ENCODE measurements at regions of chr1 and their contacts with region 1.

Region 1: DNA sequence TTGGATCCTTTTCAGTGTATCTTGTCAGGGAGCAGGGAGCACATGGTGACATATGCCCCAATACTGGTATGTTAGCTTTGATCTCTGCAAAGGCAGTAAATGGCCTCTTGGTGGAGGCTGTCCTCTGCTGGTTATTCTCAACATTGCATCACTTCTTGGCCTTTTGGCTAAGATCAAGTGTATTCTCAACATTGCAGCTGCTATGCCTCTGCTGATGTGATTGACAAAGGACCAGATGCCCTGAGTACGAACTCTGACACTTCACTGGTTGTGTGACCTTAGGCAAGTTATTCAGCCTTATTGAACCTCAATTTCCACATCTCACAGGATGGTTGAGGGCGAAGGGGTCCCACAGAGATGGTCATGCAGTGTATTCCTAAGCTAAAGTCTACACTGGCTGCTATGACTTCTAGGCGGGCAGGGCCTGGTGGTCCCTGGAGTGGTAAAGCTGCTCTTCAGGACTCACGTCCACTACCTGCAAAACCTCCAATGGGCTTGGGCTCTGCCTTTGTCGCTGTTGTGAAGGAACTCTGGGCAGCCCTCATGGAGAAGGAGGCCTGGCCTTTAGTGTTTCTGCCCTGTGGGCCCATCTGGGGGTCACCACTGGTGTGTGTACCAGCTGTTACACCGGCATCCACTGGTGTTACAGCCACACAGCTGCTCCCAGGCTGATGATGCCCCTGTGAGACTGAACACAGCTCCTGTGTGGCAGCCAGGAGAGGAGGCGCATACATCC is 64.8 kb downstream of the DNTTIP2 start:
- DNase-seq: peak; percentile 71
- H3K4me3 ChIP-seq: no peak overlapping the region
- H3K27ac ChIP-seq: no peak overlapping the region
- H3K4me1 ChIP-seq: no peaks in the 10 kb centered on the region
- H3K27me3 ChIP-seq: no peaks in the 10 kb centered on the region
- CTCF ChIP-seq: peak; percentile 89 to 98 (median 96)
- POLR2A ChIP-seq: no peak

Region 2: GRCh38 chr1:93437976-93438605 is 376.1 kb before region 1 on chr1:
- intact Hi-C with region 1: loop called (anchors 10 kb)
- DNase-seq: no peak
- H3K4me3 ChIP-seq: no peak overlapping the region
- H3K27ac ChIP-seq: no peak overlapping the region
- H3K4me1 ChIP-seq: no peaks in the 10 kb centered on the region
- H3K27me3 ChIP-seq: no peaks in the 10 kb centered on the region
- CTCF ChIP-seq: peak in 3 of 4 experiments; percentile 70 to 78 (median 77)
- POLR2A ChIP-seq: no peak

Region 3: DNA sequence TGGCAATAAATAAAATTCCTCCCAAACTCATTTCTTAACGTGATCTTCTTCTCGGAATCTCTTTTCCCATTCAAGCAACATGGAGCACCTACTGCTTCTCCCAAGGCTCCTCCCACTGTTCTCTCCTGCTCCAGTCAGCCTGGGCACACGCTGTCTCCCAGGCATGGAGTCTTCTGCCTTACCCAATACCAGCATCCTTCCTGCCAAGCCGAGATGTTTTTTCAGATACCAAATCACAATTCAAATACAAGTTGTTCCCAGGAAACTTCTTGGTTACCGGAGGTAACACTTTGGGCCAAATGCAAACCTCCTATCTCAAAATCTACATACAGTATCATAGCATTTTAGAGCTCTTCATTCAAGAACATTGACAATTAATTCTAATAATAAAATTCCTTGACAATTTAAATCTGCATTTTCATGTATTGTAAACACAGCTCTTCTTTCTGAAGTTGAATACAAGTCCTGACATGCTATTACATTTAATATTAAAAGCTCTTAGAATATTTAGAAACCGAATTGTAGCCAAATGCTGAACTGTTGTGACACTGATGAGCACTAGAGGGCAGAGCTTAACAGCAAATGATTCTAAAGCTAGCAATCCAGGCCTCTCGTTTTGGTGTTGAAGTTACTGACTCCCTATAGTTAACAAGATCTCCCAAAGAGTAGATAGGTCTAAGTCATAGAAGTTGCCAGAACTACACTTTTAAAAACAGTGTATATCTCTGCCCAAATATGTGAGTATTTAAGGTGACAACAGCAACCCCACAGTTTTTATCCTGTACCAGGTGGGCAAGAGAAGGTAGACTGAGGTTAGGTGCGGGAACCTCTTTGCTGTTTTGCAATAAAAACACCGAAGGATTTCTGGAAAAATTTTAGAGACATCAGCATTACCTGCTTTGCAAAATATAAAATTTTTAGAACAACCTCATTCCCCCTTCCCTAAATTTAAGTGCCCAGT is 184.8 kb before region 1 on chr1:
- intact Hi-C with region 1: loop called (anchors 2 kb)
- DNase-seq: peak; percentile 79
- H3K4me3 ChIP-seq: no peak overlapping the region
- H3K27ac ChIP-seq: peak overlapping the region; percentile 25 to 49
- H3K4me1 ChIP-seq: no peaks in the 10 kb centered on the region
- H3K27me3 ChIP-seq: no peaks in the 10 kb centered on the region
- CTCF ChIP-seq: peak; percentile 54 to 94 (median 81)
- POLR2A ChIP-seq: no peak

Region 4: DNA sequence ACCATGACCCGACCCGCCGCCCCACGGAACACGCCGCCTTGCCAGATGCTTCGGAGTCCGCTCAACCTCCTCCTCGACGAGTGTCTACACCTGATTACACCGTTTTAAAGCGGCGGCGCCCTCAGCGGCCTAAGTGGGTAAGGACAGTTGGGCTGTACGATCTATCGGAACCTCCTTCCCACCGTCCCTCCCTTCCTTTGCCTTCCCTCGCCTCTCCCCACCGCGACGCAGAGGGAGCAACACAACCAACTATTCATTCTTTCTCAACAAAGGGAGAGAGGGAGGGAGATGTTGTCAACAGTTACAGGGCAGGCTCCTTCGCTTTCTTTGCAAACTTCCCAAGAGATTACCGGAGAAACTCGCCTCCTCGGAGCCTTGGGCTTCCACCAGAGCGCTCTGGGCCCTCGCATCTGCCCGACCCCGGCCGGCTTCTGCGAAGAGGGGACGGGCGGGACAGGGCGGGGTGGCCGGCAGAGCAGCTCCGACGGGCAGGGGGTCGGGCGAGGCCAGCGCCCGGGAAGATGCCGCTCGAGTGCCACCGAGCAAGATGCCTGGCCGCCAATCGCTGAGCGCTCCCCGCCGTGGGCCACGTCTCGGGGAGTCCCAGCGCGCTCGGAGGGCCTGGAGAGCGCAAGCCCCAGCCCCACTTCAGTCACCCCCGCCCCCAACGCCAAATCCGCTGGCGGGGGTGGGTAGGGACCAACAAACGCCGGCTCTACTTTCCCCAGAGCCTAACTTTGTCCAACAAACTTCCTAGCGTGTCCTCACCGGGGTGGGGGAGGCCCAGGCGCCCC is 133.3 kb before region 1 on chr1:
- intact Hi-C with region 1: loop called (anchors 2 kb)
- DNase-seq: peak; percentile 90
- H3K4me3 ChIP-seq: peak overlapping the region; percentile 50 to 68
- H3K27ac ChIP-seq: peak overlapping the region; percentile 79 to 90
- H3K4me1 ChIP-seq: no peaks in the 10 kb centered on the region
- H3K27me3 ChIP-seq: no peaks in the 10 kb centered on the region
- CTCF ChIP-seq: peak in 3 of 4 experiments; percentile 21 to 82 (median 76)
- POLR2A ChIP-seq: peak; percentile 78

Region 5: GRCh38 chr1:93768380-93768863 is 45.8 kb before region 1 on chr1:
- intact Hi-C with region 1: no loop called
- DNase-seq: no peak
- H3K4me3 ChIP-seq: no peak overlapping the region
- H3K27ac ChIP-seq: no peak overlapping the region
- H3K4me1 ChIP-seq: no peaks in the 10 kb centered on the region
- H3K27me3 ChIP-seq: no peaks in the 10 kb centered on the region
- CTCF ChIP-seq: no peak
- POLR2A ChIP-seq: no peak

Region 6: GRCh38 chr1:93904228-93904627 is 90.0 kb after region 1 on chr1:
- intact Hi-C with region 1: no loop called
- DNase-seq: no peak
- H3K4me3 ChIP-seq: no peak overlapping the region
- H3K27ac ChIP-seq: no peak overlapping the region
- H3K4me1 ChIP-seq: no peaks in the 10 kb centered on the region
- H3K27me3 ChIP-seq: no peaks in the 10 kb centered on the region
- CTCF ChIP-seq: no peak
- POLR2A ChIP-seq: no peak

Region 7: GRCh38 chr1:94218332-94218731 is 404.1 kb after region 1 on chr1:
- intact Hi-C with region 1: no loop called
- DNase-seq: no peak
- H3K4me3 ChIP-seq: no peak overlapping the region
- H3K27ac ChIP-seq: no peak overlapping the region
- H3K4me1 ChIP-seq: no peaks in the 10 kb centered on the region
- H3K27me3 ChIP-seq: no peaks in the 10 kb centered on the region
- CTCF ChIP-seq: no peak
- POLR2A ChIP-seq: no peak

Measured in prostate gland (tissue), 2 donors.